ENCODE measurements at regions of chrX and their contacts with region 1.

Region 1: GRCh38 chrX:132631579-132632232 is 142.9 kb upstream of the MBNL3 start:
- DNase-seq: peak; percentile 46
- H3K4me3 ChIP-seq: no peak overlapping the region
- H3K27ac ChIP-seq: no peak overlapping the region
- H3K4me1 ChIP-seq: no peaks in the 10 kb centered on the region
- H3K27me3 ChIP-seq: peaks cover 6% of the 10 kb centered on the region
- CTCF ChIP-seq: peak; percentile 60

Region 2: DNA sequence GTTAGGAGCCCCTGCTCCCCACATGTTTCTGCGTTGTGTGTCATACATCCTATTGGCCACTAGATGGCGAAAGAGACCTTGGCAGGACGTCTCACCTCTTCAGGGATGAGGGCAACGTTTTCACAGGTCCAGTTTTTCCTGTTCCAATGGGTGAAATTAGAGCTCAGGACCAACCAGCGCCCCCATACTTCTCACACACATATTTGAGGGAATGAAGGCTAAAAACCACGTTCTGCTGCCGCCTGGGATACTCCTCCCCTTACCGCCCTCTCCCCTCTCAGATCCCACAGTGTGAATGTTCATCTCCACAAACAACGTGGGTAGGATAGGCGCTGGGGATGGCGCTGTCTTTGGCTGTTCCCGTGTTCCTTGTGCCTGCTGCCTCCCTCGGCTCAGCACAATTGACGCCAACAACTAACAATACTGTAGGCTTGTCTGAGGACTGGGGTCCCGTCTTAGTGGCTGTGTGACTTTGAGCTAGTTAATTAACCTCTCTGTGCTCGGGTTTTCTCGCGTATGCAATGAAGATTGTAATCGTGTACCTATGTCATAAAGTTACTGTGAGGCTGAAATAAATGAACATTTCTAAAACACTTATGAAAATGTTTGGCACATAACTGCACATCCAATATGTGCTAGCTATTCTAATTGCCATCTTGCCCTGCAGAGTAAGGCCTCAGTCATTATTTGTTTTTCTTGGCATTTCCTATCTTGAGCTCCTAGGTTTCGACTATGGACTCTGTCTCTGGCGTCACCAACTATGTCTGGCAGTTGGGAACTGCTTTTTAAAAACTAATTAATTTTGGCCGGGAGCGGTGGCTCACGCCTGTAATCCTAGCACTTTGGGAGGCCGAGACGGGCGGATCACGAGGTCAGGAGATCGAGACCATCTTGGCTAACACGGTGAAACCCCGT is 790.0 kb before region 1 on chrX:
- CTCF ChIA-PET with region 1: interaction called, 4 read pairs
- POLR2A ChIA-PET with region 1: no interaction called
- intact Hi-C with region 1: loop called (anchors 2 kb)
- DNase-seq: peak; percentile 69
- H3K4me3 ChIP-seq: no peak overlapping the region
- H3K27ac ChIP-seq: no peak overlapping the region
- H3K4me1 ChIP-seq: no peaks in the 10 kb centered on the region
- H3K27me3 ChIP-seq: peaks cover 19% of the 10 kb centered on the region
- CTCF ChIP-seq: peak; percentile 82

Region 3: DNA sequence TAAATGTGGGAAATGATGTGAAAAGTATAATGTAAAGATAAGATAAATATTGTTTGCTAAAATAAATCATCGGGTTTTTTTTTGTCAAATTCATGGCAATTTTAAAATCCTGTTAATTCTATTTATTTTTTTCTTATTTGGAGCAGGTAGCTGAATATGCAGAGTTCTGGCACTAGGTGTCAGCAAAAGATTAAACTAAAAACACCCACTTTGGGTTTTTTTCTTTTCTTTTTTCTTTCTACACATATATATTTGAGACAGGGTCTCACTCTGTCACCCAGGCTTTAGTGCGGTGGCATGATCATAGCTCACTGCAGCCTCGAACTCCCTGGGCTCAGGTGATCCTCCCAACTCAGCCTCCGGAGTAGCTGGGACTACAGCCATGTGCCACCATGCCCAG is 405.5 kb before region 1 on chrX:
- CTCF ChIA-PET with region 1: no interaction called
- POLR2A ChIA-PET with region 1: no interaction called
- intact Hi-C with region 1: loop called (anchors 5 kb)
- DNase-seq: peak; percentile 23
- H3K4me3 ChIP-seq: no peak overlapping the region
- H3K27ac ChIP-seq: no peak overlapping the region
- H3K4me1 ChIP-seq: no peaks in the 10 kb centered on the region
- H3K27me3 ChIP-seq: peaks cover 5% of the 10 kb centered on the region
- CTCF ChIP-seq: peak; percentile 59

Region 4: DNA sequence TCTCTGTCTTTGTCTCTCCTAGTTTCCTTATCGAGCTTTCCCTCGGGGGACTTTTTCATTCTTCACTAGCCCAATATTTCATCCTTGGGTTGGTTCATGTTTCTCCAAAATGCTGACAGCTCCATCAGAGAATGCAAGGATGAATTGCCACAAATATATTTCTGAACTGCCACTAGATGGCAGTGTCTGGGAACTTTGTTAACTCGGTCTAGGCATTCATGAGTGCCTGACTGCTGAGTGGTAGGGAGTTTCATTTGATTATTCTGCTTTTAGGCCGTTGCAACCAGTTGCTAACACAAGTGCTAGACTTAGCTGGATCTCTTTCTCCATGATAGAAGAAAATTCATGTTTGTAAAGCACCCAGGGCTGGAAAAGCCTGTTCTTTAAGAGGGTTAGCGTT is 338.9 kb before region 1 on chrX:
- CTCF ChIA-PET with region 1: interaction called, 23 read pairs
- POLR2A ChIA-PET with region 1: no interaction called
- intact Hi-C with region 1: no loop called
- DNase-seq: peak; percentile 63
- H3K4me3 ChIP-seq: no peak overlapping the region
- H3K27ac ChIP-seq: no peak overlapping the region
- H3K4me1 ChIP-seq: no peaks in the 10 kb centered on the region
- H3K27me3 ChIP-seq: no peaks in the 10 kb centered on the region
- CTCF ChIP-seq: peak; percentile 73

Region 5: GRCh38 chrX:133670383-133670782 is 1038.7 kb after region 1 on chrX:
- CTCF ChIA-PET with region 1: interaction called, 6 read pairs
- POLR2A ChIA-PET with region 1: no interaction called
- intact Hi-C with region 1: loop called (anchors 10 kb)
- DNase-seq: peak; percentile 64
- H3K4me3 ChIP-seq: no peak overlapping the region
- H3K27ac ChIP-seq: no peak overlapping the region
- H3K4me1 ChIP-seq: no peaks in the 10 kb centered on the region
- H3K27me3 ChIP-seq: no peaks in the 10 kb centered on the region
- CTCF ChIP-seq: peak; percentile 84

Region 6: DNA sequence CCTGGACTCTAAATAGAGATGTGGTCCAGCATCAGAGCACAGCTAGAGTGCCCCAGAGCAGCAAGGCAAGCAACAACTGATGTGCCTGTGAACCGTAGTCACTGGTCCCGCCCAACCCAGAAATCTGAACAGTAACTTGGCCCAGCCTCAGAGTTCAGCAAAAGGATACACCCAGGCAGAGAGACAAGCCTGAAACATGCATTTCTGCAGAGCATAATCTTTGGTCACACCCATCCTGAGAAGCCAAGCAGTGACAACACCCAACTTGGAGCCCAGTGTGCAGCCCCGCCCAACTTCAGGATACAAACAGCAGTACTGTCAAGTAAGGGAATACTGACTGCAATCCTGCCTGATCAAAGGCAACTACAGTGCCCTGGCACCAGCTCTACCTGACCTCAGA is 1684.2 kb after region 1 on chrX:
- CTCF ChIA-PET with region 1: no interaction called
- POLR2A ChIA-PET with region 1: no interaction called
- intact Hi-C with region 1: no loop called
- DNase-seq: no peak
- H3K4me3 ChIP-seq: no peak overlapping the region
- H3K27ac ChIP-seq: no peak overlapping the region
- H3K4me1 ChIP-seq: no peaks in the 10 kb centered on the region
- H3K27me3 ChIP-seq: no peaks in the 10 kb centered on the region
- CTCF ChIP-seq: no peak